Right ventricle myocardium superior (tissue), 1 donor: ENCODE measurements at regions of chr16 and their contacts with region 1.

Region 1: GRCh38 chr16:77675464-77676324 is 46.6 kb upstream of the NUDT7 start:
- DNase-seq: peak; percentile 44
- ATAC-seq: peak; percentile 92

Region 2: DNA sequence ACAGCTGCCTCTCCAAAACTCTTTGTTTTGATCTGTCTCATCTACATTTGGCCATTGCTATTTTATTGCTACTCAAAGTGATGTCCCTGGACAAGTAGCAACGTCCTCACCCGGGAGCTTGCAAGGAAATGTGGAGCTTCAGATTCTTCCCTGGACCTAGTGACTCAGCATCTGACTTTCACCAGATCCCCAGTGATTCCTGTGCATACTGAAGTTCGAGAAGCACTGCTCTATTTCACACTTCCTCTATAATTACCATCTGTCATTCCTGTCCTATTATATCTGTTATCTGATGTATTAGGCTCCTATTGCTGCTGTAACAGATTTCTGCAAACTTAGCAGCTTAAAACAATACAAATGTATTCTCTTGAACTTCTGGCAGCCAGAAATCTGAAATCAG is 84.1 kb after region 1 on chr16:
- intact Hi-C with region 1: no loop called
- DNase-seq: no peak
- ATAC-seq: no peak

Region 3: DNA sequence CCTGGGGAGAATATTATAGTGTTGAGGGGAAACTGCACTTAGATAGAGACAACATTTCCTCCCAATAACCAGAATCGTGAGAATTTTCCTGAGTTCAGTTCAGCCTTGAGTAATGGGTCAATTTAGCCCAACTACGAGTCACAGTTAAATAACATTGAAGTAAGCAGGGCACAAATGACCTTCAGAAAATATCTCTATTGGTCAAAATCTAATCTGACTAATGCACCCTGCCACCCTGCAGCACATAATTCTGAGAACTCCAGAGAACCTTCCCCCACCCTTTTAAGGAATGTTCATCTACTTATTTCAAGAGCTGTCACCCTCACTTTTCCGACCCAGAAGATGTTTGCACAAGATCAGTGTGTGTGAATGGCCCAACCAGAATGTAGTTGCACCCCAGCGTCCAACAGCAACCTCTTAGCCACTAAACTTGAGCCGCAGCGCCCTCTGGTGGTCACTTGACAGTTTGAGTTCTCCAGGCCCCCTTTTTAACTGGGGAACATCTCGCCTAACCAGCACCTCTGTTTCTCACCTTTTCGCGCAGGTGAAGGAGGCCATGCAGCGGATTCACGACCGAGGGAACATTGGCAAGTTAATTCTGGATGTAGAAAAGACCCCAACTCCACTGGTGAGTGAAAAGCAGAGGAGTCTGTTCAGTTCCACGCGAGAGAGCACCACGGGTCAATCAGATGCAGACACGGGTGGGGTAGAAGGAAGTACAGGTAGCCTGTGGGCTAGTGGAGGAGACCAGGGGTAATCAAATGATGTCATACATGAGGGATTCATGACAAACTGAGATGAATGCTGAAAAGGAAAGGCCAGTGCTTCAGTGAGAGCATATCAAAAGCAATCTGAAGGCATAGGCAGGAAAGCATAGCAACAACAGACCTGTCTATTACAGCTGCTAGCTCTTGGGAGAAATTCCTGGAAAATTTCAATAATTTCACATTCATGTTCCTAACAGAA is 295.9 kb after region 1 on chr16:
- intact Hi-C with region 1: loop called (anchors 2 kb)
- DNase-seq: peak; percentile 88
- ATAC-seq: peak; percentile 95

Region 4: DNA sequence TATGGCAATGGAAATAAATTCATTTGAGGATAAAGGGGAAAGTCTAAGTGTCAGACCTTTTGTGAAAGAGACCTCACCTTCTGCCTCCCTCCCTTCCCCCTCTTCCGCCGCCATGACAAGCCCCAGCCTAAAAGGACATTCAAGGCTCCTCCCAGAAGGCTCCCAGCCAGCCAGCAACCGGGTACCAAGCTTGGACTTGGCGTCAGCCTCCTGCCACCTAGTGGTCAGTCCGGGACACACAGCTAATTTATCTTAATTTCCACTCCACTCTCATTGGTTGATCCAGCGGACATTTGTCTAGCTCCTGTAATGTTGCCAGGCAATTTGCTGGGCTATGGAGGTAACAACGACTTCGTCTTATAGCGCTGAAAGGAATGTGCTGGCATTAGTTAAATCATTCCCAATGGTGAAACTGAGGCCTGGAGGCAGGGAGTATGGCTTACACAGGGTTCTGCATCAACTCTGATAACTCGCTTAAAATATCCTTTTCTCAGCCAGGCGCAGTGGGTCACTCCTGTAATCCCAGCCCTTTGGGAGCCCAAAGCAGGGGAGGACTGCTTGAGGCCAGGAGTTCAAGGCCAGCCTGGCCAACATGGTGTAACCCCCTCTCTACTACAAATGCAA is 327.3 kb after region 1 on chr16:
- intact Hi-C with region 1: loop called (anchors 10 kb)
- DNase-seq: peak; percentile 87
- ATAC-seq: peak; percentile 97